Naive thymus-derived CD4-positive, alpha-beta T cell (primary cell): ENCODE measurements at regions of chr7 and their contacts with region 1.

Region 1: GRCh38 chr7:100360135-100360854 is 2.4 kb downstream of the PILRB start:
- DNase-seq: no peak
- ATAC-seq: no peak
- H3K4me3 ChIP-seq: no peak overlapping the region
- H3K4me3 Mint-ChIP-seq: peak overlapping the region in 1 of 10 donors; percentile 49
- H3K27ac ChIP-seq: no peak overlapping the region
- H3K27ac Mint-ChIP-seq: peak overlapping the region in 7 of 9 donors; percentile 15 to 79 (median 66)
- H3K4me1 ChIP-seq: no peaks in the 10 kb centered on the region
- H3K4me1 Mint-ChIP-seq: peaks cover 0 to 14% (median 3%) of the 10 kb centered on the region in 7 donors
- H3K27me3 ChIP-seq: no peaks in the 10 kb centered on the region
- H3K27me3 Mint-ChIP-seq: no peaks in the 10 kb centered on the region

Region 2: GRCh38 chr7:100396421-100396982 is 36.2 kb after region 1 on chr7:
- CTCF ChIA-PET with region 1: no interaction called
- POLR2A ChIA-PET with region 1: no interaction called
- intact Hi-C with region 1: loop called in 1 of 2 experiments (anchors 5 kb)
- DNase-seq: peak in 8 of 9 donors; percentile 19 to 54 (median 48)
- ATAC-seq: peak; percentile 95
- H3K4me3 ChIP-seq: no peak overlapping the region
- H3K4me3 Mint-ChIP-seq: peak overlapping the region; percentile 59 to 80 (median 72)
- H3K27ac ChIP-seq: peak overlapping the region; percentile 29
- H3K27ac Mint-ChIP-seq: peak overlapping the region; percentile 63 to 92 (median 83)
- H3K4me1 ChIP-seq: peaks cover 6 to 9% of the 10 kb centered on the region in 2 donors
- H3K4me1 Mint-ChIP-seq: peaks cover 19 to 28% (median 22%) of the 10 kb centered on the region in 7 donors
- H3K27me3 ChIP-seq: no peaks in the 10 kb centered on the region
- H3K27me3 Mint-ChIP-seq: peaks cover 0 to 51% (median 0%) of the 10 kb centered on the region in 5 donors